ENCODE measurements at regions of chr18 and their contacts with region 1.

Region 1: DNA sequence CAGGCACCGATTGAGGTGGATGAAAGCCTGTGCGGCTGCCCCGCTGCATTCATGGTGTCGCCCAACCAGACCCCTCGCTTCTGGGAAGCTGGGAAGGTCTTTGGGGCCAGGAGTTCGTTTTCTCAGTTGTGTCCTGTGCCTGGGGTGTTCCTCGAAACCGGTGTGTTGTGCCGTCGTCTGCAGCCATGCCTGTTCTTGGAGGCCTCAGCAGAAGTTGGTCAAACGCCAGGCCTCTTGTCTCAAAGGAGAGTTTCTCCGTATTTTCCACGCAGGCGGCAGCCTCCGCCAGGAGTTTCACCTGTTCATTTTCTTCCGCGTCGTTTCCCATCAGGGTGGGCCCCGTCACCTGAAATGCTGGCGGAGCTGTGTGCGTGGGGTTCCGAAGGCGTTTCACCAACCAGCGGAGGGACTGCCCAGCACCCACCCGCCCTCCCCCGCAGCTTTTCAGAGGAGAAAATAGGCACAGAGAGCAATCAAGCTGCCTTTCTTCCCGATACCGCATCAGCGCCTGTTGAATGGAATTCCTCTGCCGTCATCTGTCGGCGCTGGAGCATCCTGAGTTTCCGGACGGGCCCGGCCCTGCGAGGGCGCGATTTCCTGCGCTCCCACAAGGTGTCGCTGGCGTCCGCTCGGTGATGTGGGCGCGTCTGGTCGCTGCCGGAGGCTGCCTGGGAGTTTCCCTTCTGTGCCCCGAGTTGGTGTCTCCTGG is 17.0 kb upstream of the NFATC1 start:
- DNase-seq: peak; percentile 65 to 89 (median 81)
- ATAC-seq: peak; percentile 98
- H3K4me3 ChIP-seq: no peak overlapping the region
- H3K4me3 Mint-ChIP-seq: no peak overlapping the region
- H3K27ac ChIP-seq: no peak overlapping the region
- H3K27ac Mint-ChIP-seq: peak overlapping the region; percentile 41
- H3K4me1 ChIP-seq: peaks cover 7% of the 10 kb centered on the region
- H3K4me1 Mint-ChIP-seq: peaks cover 7% of the 10 kb centered on the region
- H3K27me3 ChIP-seq: no peaks in the 10 kb centered on the region
- H3K27me3 Mint-ChIP-seq: no peaks in the 10 kb centered on the region
- CTCF ChIP-seq: peak; percentile 94

Region 2: DNA sequence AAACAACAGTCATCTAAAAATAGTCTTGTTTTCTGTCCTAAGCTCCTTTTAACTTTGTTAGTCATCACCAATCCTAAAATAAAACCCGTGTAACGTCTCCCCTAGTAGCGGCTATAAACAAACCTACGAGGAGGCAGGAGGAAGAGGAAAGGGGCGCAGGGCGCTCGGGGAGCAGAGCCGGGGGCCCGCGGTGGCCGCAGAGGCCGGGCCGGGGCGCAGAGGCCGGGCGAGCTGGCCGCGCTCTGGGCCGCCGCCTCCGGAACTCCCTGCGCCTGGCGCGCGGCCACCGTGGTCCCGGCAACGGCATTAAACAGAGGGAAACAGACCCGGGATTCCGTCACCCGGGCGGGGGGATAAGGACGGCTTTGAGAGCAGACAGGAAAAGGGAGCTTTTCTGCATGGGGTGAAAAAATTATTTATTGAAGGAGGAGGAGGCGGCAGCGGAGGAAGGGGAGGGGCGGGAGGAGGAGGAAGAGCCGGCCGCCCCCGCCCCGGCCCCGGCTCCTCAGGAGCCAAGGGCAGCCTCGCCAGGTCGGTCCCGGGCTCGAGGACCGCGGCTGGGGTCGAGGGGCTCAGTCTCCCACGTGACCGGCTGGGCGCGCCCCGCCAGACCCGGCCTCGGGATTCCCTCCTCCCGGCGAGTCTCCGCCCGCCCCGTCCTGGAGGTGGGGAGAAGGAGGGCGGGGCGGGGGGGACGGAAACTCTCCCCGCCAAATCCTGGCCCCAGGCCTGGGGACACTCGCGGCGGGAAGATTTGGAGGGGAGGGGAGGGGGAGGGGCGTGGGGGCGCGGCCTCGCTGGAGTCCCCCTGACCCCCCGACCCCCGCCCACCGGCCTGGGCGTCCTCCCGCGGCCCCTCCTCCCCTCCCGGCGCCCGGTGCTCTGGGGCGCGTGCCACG is 15.2 kb after region 1 on chr18:
- CTCF ChIA-PET with region 1: interaction called, 68 read pairs
- POLR2A ChIA-PET with region 1: no interaction called
- intact Hi-C with region 1: no loop called
- DNase-seq: peak in 5 of 9 experiments; percentile 40 to 69 (median 59)
- ATAC-seq: peak; percentile 15
- H3K4me3 ChIP-seq: peak overlapping the region; percentile 45 to 59
- H3K4me3 Mint-ChIP-seq: peak overlapping the region; percentile 80
- H3K27ac ChIP-seq: peak overlapping the region in 1 of 2 experiments; percentile 24
- H3K27ac Mint-ChIP-seq: peak overlapping the region; percentile 46
- H3K4me1 ChIP-seq: peaks cover 25% of the 10 kb centered on the region
- H3K4me1 Mint-ChIP-seq: peaks cover 33% of the 10 kb centered on the region
- H3K27me3 ChIP-seq: peaks cover 0 to 14% of the 10 kb centered on the region in 2 experiments
- H3K27me3 Mint-ChIP-seq: peaks cover 4% of the 10 kb centered on the region
- CTCF ChIP-seq: no peak

Region 3: DNA sequence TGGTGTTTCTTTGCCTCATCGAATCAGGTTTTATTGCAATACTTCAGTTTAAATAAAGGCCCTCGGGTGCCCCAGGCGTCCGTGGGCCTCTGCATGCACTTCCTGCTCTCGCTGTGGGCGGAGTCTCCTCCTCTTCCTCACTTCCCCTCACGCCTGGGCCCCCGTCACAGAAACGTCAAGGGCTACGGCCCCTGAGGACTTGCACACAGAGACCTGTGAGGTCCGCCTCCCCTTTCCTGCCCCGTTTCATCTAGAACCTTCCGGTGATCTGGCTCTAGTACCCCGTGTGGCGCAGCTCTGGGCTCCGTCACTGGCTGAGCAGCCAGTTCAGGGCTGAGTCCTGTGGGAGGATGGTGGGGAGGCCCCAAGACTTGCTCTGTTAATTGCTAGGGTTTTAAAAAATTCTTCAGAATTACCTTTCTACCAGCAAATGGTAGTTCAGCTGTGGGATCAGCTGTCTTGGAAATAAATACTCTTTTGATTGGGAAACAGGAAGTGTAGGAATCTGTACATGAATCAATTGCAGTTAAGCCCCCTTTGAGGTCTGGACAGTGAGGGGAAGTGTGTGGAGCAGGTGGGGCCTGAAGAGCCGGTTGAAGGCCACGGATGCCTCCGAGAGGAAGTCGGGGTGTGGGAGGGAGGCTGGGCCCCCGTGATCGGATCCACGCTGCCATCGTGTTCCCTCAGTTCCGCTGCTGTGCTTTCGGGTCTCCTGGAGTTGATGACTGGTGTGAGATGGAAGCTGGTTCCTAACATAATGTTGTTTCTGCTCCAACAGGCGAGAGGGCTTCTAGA is 27.3 kb after region 1 on chr18:
- CTCF ChIA-PET with region 1: interaction called, 51 read pairs
- POLR2A ChIA-PET with region 1: no interaction called
- intact Hi-C with region 1: loop called in 1 of 2 experiments (anchors 1 kb)
- DNase-seq: peak; percentile 78 to 96 (median 87)
- ATAC-seq: peak; percentile 85
- H3K4me3 ChIP-seq: peak overlapping the region; percentile 34 to 38
- H3K4me3 Mint-ChIP-seq: peak overlapping the region; percentile 72
- H3K27ac ChIP-seq: peak overlapping the region; percentile 86 to 94
- H3K27ac Mint-ChIP-seq: peak overlapping the region; percentile 94
- H3K4me1 ChIP-seq: peaks cover 59% of the 10 kb centered on the region
- H3K4me1 Mint-ChIP-seq: peaks cover 55% of the 10 kb centered on the region
- H3K27me3 ChIP-seq: no peaks in the 10 kb centered on the region
- H3K27me3 Mint-ChIP-seq: no peaks in the 10 kb centered on the region
- CTCF ChIP-seq: no peak

Region 4: GRCh38 chr18:79523736-79524180 is 145.1 kb after region 1 on chr18:
- CTCF ChIA-PET with region 1: interaction called, 223 read pairs
- POLR2A ChIA-PET with region 1: no interaction called
- intact Hi-C with region 1: loop called (anchors 1 kb)
- DNase-seq: peak; percentile 44 to 93 (median 73)
- ATAC-seq: peak; percentile 52
- H3K4me3 ChIP-seq: peak overlapping the region; percentile 44 to 52
- H3K4me3 Mint-ChIP-seq: peak overlapping the region; percentile 86
- H3K27ac ChIP-seq: peak overlapping the region; percentile 81
- H3K27ac Mint-ChIP-seq: peak overlapping the region; percentile 97
- H3K4me1 ChIP-seq: peaks cover 62% of the 10 kb centered on the region
- H3K4me1 Mint-ChIP-seq: peaks cover 58% of the 10 kb centered on the region
- H3K27me3 ChIP-seq: no peaks in the 10 kb centered on the region
- H3K27me3 Mint-ChIP-seq: no peaks in the 10 kb centered on the region
- CTCF ChIP-seq: no peak

Region 5: DNA sequence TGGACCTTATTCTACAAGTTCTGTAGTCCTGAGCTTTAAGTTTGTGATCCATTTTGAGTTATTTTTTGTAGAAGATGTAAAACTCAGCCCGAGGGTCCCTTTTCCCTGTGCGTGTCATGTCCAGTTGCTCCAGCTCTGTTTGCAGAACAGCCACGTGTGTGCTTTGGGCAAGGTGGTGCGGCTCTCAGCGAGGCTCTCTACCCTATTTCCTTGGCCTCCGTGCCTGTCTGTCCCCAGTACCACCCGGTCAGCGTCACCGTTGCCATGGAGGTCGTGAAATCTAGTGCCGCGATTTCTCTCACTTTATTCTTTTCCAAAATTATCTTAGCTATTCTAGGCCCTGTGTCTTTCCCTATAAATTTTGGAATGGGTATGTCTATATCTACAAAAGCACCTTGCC is 159.9 kb after region 1 on chr18:
- CTCF ChIA-PET with region 1: interaction called, 23 read pairs
- POLR2A ChIA-PET with region 1: no interaction called
- intact Hi-C with region 1: no loop called
- DNase-seq: no peak
- ATAC-seq: no peak
- H3K4me3 ChIP-seq: no peak overlapping the region
- H3K4me3 Mint-ChIP-seq: no peak overlapping the region
- H3K27ac ChIP-seq: no peak overlapping the region
- H3K27ac Mint-ChIP-seq: peak overlapping the region; percentile 33
- H3K4me1 ChIP-seq: no peaks in the 10 kb centered on the region
- H3K4me1 Mint-ChIP-seq: no peaks in the 10 kb centered on the region
- H3K27me3 ChIP-seq: no peaks in the 10 kb centered on the region
- H3K27me3 Mint-ChIP-seq: no peaks in the 10 kb centered on the region
- CTCF ChIP-seq: no peak

Region 6: DNA sequence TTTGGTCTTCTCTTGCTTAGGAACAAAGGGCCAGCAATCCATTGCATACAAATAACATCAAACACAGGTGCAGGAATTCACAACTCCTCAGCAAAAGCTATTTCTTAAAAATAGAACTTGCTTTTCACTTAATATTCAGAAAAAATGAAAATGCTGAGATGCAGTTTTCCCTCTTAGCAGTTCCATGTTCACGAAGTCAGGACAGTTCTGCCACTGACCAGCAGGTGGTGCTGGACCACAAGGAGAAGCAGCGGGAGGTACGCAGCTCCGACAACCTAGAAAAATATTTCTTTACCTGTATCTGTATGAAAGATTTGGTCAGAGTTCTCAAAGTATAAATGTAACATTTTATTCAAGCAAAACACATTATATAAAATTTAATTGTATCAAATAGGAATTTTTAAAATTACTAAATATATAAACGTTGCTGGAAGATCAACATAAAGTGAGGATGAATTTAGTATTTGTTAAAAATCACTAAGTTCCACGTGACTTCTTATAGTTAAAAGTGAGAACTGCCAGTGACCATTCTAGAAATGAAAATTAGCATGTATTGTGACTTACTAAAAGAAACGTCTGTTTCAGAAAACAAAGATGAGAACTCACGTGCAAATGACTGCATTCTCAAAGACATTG is 779.1 kb after region 1 on chr18:
- CTCF ChIA-PET with region 1: no interaction called
- POLR2A ChIA-PET with region 1: no interaction called
- intact Hi-C with region 1: loop called in 1 of 2 experiments (anchors 5 kb)
- DNase-seq: peak; percentile 48 to 83 (median 79)
- ATAC-seq: peak; percentile 77
- H3K4me3 ChIP-seq: no peak overlapping the region
- H3K4me3 Mint-ChIP-seq: no peak overlapping the region
- H3K27ac ChIP-seq: no peak overlapping the region
- H3K27ac Mint-ChIP-seq: no peak overlapping the region
- H3K4me1 ChIP-seq: no peaks in the 10 kb centered on the region
- H3K4me1 Mint-ChIP-seq: peaks cover 3% of the 10 kb centered on the region
- H3K27me3 ChIP-seq: peaks cover 0 to 3% of the 10 kb centered on the region in 2 experiments
- H3K27me3 Mint-ChIP-seq: peaks cover 9% of the 10 kb centered on the region
- CTCF ChIP-seq: peak; percentile 100